Natural killer cell (primary cell): ENCODE measurements at regions of chr5 and their contacts with region 1.

Region 1: DNA sequence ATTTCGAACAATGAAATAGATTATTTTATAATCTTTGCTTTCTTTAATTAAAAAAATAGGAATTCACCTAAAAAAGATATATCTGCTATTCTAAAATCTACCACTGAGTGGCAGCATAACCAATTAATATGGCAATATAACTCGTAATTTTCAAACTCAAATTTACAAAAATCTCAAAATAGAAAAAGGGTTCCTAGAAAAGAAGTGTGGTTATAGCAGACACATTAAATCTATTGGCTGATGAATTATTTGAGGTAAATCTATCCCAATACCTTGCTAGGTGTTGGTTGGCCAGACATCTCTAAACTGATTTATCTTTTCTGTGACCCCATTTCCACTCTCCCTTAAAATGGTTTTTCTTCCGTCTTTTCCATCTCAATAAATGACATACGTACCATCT is 30.2 kb upstream of the NRG2 start:
- DNase-seq: peak in 1 of 2 donors; percentile 70
- ATAC-seq: no peak
- H3K4me3 ChIP-seq: no peak overlapping the region
- H3K4me3 Mint-ChIP-seq: no peak overlapping the region
- H3K27ac ChIP-seq: no peak overlapping the region
- H3K27ac Mint-ChIP-seq: no peak overlapping the region
- H3K4me1 ChIP-seq: no peaks in the 10 kb centered on the region
- H3K4me1 Mint-ChIP-seq: no peaks in the 10 kb centered on the region
- H3K27me3 ChIP-seq: peaks cover 7% of the 10 kb centered on the region
- H3K27me3 Mint-ChIP-seq: peaks cover 16 to 42% of the 10 kb centered on the region in 2 donors
- CTCF ChIP-seq: peak; percentile 93

Region 2: DNA sequence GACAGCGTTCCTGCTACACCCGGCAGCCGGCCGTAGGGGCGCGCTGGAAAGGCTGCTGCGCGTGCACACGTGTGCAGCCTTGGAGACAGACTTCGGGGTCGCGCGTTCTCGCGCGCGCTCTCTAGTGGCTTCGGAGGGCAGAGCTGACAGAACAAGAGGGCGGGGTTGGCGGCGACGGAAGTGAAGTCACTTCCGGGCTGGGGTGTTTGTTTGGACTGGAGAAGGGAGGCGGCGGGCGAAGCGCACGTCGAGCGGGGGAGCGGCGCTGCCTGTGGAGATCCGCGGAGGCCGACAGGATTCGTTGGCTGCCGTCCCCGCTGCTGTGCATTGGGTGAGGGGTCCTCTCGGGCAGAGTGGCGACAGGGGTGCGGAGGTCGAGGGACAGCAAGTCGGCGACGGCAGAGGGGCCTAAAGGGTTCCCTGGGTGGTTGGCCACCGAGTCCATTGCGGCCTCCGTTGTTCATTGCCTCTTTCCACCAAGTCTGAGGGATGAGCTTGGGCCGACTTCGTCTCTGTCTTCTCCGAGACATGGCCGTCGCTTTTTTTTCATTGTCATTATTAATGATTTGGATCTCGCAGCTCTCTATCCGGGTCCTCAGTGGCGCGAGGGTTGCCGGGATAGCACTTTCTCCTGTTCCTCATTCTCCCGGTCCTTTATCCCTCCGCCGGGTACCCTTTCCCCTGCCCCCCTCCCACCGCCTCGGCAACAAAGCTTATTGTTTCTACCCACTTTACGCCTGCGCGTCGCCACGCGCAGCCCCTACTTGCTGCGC is 731.5 kb before region 1 on chr5 and contains the start of gene PAIP2:
- intact Hi-C with region 1: no loop called
- DNase-seq: peak; percentile 96 to 99
- ATAC-seq: peak; percentile 88 to 97 (median 92)
- H3K4me3 ChIP-seq: peak within 1 kb of the TSS; percentile 91
- H3K4me3 Mint-ChIP-seq: peak within 1 kb of the TSS; percentile 96
- H3K27ac ChIP-seq: peak within 1 kb of the TSS; percentile 97
- H3K27ac Mint-ChIP-seq: peak within 1 kb of the TSS; percentile 95 to 98
- H3K4me1 ChIP-seq: peaks cover 21% of the 10 kb centered on the region
- H3K4me1 Mint-ChIP-seq: peaks cover 41 to 47% of the 10 kb centered on the region in 2 donors
- H3K27me3 ChIP-seq: no peaks in the 10 kb centered on the region
- H3K27me3 Mint-ChIP-seq: no peaks in the 10 kb centered on the region
- CTCF ChIP-seq: peak; percentile 67
- total RNA-seq, gene PAIP2: 105 to 126 (median 110) TPM

Region 3: GRCh38 chr5:140157032-140157803 is 83.9 kb after region 1 on chr5:
- intact Hi-C with region 1: loop called (anchors 1 kb)
- DNase-seq: peak; percentile 83 to 94
- ATAC-seq: peak; percentile 96 to 100 (median 99)
- H3K4me3 ChIP-seq: no peak overlapping the region
- H3K4me3 Mint-ChIP-seq: peak overlapping the region; percentile 13
- H3K27ac ChIP-seq: no peak overlapping the region
- H3K27ac Mint-ChIP-seq: peak overlapping the region in 1 of 2 donors; percentile 31
- H3K4me1 ChIP-seq: peaks cover 14% of the 10 kb centered on the region
- H3K4me1 Mint-ChIP-seq: peaks cover 0 to 7% of the 10 kb centered on the region in 2 donors
- H3K27me3 ChIP-seq: no peaks in the 10 kb centered on the region
- H3K27me3 Mint-ChIP-seq: peaks cover 0 to under 1% of the 10 kb centered on the region in 2 donors
- CTCF ChIP-seq: peak; percentile 81